Activated T-helper 2 cell treated with anti-CD3 and anti-CD28 coated beads, Interferon-gamma antibody, Interleukin-2, Interleukin-4, amounts not matched to agents 10 μg/mL and 5 μg/mL and 100 μg/mL, durations not matched to agents 14 hours and 24 hours and 36 hours (primary cell): ENCODE measurements at regions of chr1 and their contacts with region 1.

Region 1: DNA sequence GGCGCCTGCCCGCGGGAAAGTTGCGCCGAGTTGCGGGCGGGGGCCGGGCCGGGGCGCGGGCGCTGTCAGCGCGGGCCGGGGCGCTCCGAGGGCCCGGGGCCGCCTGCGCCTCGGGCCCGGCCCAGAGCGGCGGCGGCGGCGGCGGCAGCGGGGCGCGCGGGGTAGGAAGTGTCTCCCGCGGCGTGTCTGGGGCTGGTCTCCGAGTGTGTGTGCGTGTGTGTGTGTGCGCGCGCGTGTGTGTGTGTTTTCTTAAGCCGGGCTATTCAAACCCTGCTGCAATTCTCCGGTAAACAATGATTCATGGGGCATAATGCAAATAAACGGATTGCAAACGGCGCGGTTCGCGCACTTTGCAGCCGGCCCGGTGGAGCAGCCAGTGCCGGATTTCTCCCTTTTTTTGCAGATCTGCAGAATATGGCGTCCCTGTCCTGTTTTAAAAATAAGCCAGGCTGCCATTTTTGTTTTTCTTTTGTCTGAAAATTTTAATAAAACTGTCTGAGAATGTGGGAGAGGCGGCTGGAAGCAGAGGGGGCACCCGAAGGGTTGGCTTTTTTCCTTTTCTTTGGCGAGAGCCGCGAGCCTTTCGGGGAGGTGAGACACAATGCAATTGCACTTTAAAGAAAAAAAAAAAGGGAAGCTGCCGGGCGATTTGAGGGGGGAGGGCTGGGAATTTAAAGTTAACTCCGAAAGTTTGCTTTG is 558 bp downstream of the ZNF362 start:
- DNase-seq: peak; percentile 54
- H3K4me3 Mint-ChIP-seq: peak overlapping the region; percentile 92
- H3K27ac Mint-ChIP-seq: peak overlapping the region; percentile 94
- H3K4me1 Mint-ChIP-seq: peaks cover 24% of the 10 kb centered on the region
- H3K27me3 Mint-ChIP-seq: peaks cover 3% of the 10 kb centered on the region

Region 2: DNA sequence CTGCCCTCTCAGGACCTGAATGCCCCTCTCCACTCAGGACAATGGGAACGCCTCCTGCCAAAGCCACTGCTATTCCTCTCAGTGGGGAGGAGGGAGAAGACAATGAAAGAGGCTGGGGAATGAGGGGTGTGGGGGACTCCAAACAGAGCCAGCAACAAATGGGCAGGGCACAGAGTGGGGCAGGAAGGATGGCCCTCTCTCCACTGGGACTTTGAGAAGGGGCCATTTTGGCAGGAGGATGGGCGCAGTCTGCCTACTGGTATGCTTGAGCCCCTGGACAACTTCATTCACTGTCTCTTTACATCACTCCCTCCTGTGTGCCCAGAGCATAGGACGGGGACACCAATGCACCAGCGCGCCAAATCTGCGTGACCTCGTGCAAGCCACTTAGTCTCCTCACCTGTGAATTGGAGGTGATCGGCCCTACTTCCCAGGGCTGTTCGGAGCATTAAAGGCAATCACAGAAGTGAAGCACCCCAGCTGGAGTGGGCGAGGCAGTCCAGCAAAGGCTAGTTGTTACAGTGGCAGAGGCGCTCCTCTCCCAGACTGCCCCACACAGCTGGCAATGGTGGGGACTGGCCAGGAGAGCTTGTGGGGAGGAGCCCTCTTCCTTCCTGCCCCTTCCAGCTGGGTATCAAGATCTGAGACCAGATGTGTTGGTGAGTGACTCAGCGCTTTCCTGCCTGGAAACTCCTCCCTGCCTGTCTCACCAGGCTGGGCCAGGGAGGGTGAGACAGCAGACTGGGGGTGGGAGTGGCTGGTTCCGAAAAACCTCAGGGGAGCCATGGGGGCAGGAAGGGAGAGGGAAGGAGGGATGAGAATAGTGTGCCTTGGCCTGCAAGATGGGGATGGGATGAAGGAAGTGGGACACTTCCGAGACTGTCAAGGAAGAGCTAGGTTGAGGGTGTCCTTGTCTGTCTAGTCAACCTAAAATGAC is 531.9 kb before region 1 on chr1:
- intact Hi-C with region 1: no loop called
- DNase-seq: peak; percentile 18
- H3K4me3 Mint-ChIP-seq: no peak overlapping the region
- H3K27ac Mint-ChIP-seq: no peak overlapping the region
- H3K4me1 Mint-ChIP-seq: peaks cover 13% of the 10 kb centered on the region
- H3K27me3 Mint-ChIP-seq: peaks cover 11% of the 10 kb centered on the region

Region 3: GRCh38 chr1:33181921-33182341 is 74.9 kb before region 1 on chr1 and contains the start of gene TRIM62:
- intact Hi-C with region 1: loop called (anchors 5 kb)
- DNase-seq: peak; percentile 70
- H3K4me3 Mint-ChIP-seq: peak within 1 kb of the TSS; percentile 80
- H3K27ac Mint-ChIP-seq: peak within 1 kb of the TSS; percentile 55
- H3K4me1 Mint-ChIP-seq: peaks cover 23% of the 10 kb centered on the region
- H3K27me3 Mint-ChIP-seq: peaks cover 27% of the 10 kb centered on the region
- total RNA-seq, gene TRIM62: 5.0 and 5.6 TPM in 2 replicates

Region 4: DNA sequence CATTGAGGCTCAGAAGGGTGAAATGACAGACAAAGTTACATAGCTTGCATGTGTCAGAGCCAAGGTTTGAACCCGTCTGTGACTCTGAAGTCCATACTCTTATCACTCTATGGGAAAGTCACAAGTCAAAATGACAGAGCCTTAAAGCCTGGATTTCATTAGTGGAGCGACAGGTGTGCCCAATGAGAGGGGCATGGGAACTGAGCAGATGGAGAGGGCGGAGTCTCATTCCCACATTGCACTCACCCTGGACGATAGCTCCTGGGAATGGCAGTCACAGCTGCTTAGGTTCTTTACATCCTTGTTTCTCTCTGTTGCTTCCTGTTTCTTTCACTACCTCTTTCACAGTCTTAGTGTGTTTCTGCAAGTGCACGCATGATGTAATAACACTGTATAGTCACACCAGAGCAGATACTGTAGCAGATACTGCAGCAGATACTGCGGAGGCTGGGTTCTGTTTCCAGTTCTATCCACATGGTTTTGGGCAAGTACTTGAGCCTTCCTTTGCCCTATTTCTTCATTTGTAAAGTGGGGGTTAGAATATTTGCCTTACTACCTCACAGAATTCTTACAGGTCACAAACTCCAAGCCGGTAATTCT is 342.8 kb after region 1 on chr1:
- intact Hi-C with region 1: no loop called
- DNase-seq: no peak
- H3K4me3 Mint-ChIP-seq: no peak overlapping the region
- H3K27ac Mint-ChIP-seq: no peak overlapping the region
- H3K4me1 Mint-ChIP-seq: no peaks in the 10 kb centered on the region
- H3K27me3 Mint-ChIP-seq: peaks cover 19% of the 10 kb centered on the region